GM13976 (cell line): ENCODE measurements at regions of chr11 and their contacts with region 1.

Region 1: DNA sequence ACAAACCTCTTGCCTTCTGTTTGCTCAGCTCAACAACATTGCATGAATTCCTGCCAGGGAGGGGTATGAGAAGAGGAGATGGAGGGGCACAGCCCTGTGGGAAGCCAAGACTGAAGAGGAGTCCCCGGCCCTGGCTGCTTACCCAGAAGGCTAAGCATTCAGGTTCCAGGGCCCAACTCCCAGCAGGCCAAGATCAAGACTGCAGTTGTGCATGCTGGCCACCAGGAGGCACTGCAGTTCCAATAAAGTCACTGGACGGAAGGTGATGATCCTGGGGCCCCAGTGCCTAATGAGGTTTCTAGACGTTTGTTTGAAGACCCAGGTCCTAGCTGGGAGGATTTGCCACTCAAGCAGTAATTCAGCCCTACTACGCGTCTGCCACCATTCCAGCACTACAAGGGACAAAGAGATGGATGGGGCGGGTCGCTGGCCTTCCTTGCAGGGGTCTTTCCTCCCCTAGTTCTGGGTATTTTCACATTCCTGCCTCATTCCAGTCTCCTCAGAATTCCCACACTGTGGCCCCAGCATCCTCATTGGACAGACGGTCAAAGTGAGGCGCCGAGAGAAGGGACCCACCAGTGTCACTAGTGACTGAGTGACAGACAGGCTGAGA is 23.6 kb downstream of the ALX4 start:
- DNase-seq: peak; percentile 88
- CTCF ChIP-seq: peak; percentile 93

Region 2: GRCh38 chr11:43515090-43515489 is 771.3 kb before region 1 on chr11:
- in situ Hi-C with region 1: no loop called
- DNase-seq: peak; percentile 32
- CTCF ChIP-seq: no peak

Region 3: DNA sequence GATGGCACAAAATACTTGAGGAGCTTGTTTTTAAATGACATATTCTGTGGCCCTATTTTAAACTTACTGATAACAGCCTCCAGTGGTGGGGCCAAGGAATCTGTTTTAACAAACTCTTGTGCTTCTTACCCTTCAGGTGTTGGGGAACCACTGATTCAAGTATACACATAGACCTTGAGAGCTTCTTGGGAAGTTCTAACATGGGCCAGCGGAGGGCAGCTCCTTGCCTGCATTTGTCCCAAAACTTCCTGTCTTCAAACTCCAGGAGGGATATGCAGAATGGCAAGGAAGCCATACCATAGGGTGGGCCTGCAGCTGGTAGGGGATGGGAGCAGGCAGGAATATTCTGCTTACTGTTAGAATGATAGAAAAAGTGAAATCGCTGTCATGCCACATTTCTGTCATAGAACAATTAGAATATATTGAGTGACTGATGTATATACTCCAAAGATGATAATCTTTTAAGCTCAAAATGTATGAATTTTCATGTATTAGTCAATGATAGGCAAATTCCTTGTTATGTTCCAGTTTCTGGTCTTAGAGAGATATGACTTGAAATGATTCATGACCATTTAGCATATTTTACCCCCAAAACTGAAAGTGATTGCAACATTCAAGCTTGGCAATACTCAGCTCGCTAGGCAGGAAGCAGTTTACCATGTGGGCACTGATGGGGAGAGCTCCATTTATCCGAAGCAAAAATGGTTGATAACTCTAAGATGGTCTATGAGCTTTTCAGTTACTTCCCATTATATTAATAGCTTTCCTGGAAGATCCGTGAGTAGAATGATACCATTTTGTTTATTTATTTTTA is 181.7 kb before region 1 on chr11:
- in situ Hi-C with region 1: loop called (anchors 10 kb)
- DNase-seq: no peak
- CTCF ChIP-seq: no peak

Region 4: DNA sequence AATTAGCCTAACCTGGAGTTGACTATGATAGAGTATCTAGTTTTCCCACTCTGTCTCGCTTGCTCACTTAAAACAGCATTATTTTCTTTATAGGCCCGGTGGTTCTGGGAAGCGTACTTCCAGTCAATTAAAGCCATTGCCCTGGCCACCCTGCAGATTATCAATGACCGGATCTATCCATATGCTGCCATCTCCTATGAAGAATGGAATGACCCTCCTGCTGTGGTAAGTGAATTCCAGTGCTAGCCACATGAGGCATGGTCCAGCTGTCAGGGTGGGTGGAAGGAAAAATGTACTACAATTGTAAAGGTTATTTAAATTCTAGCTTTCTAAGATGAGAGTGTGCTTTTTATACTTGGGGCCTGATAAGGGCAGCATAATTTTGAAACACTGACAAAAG is 114.9 kb before region 1 on chr11:
- in situ Hi-C with region 1: no loop called
- DNase-seq: no peak
- CTCF ChIP-seq: no peak

Region 5: DNA sequence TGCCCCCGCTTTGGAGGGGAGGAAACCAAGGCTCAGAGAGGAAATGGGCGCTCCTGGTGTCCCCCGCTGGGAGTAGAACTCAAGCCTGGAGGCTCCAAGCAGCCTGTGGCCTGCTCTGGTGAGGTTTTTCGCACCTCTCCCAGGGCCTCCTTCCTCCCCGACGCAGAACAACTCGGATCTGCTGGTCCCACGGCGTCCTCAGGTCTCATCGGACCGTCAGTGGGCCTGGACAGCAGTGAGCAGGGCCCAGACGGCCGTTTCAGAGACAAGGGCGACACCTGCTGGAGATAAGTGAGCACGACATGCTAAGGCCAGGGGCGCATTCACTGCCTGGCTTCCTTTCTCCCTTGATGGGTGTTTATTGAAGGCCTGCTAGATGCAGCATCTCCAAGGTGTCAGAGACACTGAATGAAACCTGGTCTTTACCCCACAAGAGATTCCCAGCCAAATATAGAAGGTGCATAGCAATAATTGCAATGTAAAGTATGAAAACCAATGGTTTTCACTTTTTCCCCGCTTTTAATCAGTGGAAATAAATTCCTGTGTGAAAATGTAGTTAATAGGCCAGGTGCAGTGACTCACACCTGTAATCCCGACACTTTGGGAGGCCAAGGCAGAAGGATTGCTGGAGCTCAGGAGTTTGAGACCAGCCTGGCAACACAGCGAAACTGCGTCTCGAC is 252.1 kb after region 1 on chr11:
- in situ Hi-C with region 1: loop called (anchors 5 kb)
- DNase-seq: peak; percentile 88
- CTCF ChIP-seq: peak; percentile 93

Region 6: GRCh38 chr11:44911029-44911814 is 624.8 kb after region 1 on chr11:
- in situ Hi-C with region 1: loop called (anchors 25 kb)
- DNase-seq: peak; percentile 89
- CTCF ChIP-seq: peak; percentile 70